Common myeloid progenitor, CD34-positive (primary cell): ENCODE measurements at regions of chr19 and their contacts with region 1.

Region 1: DNA sequence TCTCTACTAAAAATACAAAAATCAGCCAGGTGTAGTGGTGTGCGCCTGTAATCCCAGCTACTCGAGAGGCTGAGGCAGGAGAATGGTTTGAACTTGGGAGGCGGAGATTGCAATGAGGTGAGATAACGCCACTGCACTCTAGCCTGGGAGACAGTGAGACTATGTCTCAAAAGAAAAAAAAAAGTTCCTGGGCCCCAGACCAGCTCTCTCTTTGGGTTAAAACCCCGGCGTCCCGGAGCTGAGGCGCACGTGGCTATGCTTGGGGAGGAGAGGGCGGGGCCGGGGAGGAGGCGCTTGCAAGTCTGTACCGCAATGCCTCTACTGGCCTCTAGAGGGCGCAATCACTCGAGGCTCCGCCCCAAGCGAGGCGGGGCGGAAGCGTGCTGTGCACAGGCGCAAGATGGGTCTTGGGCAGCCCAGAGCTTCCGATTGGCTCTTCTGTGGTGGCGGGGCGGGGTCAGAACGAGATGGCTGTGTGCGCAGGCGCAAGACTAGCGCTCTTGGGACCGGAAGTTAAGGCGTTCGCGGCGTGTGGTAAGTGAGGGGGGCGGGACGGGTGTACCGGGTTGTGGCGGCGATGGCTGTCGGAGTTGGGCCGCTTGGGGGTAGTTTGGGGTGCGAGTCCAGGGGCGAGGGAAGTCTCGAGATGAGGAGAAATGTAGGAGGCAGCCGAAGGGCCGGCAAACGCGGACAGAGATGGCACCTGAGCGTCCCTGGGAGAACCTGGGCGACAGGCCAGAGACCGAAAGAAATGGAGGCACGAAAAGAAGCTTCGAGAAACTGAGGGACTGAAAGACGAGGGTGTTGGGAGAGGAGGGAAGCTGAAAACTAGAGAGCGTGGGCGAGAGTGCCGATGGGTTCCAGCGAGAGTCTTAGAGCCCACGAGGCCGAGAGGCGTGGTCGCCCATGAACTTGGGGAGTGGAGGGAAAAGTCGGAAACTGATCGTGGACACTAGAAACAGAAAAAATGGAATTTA is at the start of gene DHX34:
- DNase-seq: peak; percentile 99 to 100 (median 99)
- H3K4me3 ChIP-seq: peak within 1 kb of the TSS; percentile 81 to 96 (median 91)
- H3K27ac ChIP-seq: peak within 1 kb of the TSS; percentile 42 to 83
- H3K4me1 ChIP-seq: peaks cover 5 to 23% (median 15%) of the 10 kb centered on the region in 4 experiments
- H3K27me3 ChIP-seq: no peaks in the 10 kb centered on the region

Region 2: GRCh38 chr19:47210689-47211316 is 138.3 kb before region 1 on chr19:
- CTCF ChIA-PET with region 1: no interaction called
- POLR2A ChIA-PET with region 1: no interaction called
- DNase-seq: peak; percentile 80 to 88 (median 81)
- H3K4me3 ChIP-seq: no peak overlapping the region
- H3K27ac ChIP-seq: peak overlapping the region; percentile 54 to 82
- H3K4me1 ChIP-seq: peaks cover 2 to 13% (median 11%) of the 10 kb centered on the region in 4 experiments
- H3K27me3 ChIP-seq: no peaks in the 10 kb centered on the region

Region 3: DNA sequence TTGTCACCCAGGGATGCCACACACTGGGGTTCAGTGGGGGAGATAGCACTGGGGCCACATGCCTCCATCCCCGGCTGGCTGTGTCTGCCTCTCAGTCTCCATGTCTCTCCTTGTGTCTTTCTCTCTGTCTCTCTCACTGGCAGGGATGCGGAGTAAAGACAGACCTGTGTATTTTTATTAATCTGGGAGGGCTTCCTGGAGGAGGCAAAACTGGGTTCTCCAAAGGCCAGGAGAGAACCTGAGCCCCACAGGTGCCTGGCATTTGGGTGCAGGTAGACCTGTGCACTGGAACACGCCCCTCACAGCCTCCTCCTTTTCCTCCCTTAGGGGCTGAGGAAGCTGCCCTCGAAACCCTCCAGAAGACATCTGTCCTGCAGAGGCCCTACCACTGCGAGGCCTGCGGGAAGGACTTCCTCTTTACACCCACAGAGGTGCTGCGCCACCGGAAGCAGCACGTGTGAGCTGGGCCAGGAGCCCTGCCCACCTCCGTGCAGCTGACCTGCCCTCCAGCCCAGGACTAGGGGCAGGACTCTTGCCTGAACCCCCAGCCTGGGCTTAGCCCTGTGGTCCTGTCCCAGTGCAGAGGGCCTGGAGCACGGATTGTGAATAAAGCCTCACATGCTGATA is 32.7 kb after region 1 on chr19:
- CTCF ChIA-PET with region 1: interaction called, 11 read pairs
- POLR2A ChIA-PET with region 1: no interaction called
- DNase-seq: peak; percentile 52 to 84 (median 76)
- H3K4me3 ChIP-seq: no peak overlapping the region
- H3K27ac ChIP-seq: no peak overlapping the region
- H3K4me1 ChIP-seq: peaks cover 0 to 21% (median 13%) of the 10 kb centered on the region in 4 experiments
- H3K27me3 ChIP-seq: peaks cover 0 to 6% (median 0%) of the 10 kb centered on the region in 5 experiments

Region 4: GRCh38 chr19:47391510-47392223 is 42.6 kb after region 1 on chr19:
- CTCF ChIA-PET with region 1: interaction called, 14 read pairs
- POLR2A ChIA-PET with region 1: no interaction called
- DNase-seq: peak; percentile 74 to 87 (median 78)
- H3K4me3 ChIP-seq: no peak overlapping the region
- H3K27ac ChIP-seq: no peak overlapping the region
- H3K4me1 ChIP-seq: no peaks in the 10 kb centered on the region
- H3K27me3 ChIP-seq: peaks cover 0 to 8% (median 0%) of the 10 kb centered on the region in 5 experiments